AG04449 (cell line): ENCODE measurements at regions of chr3 and their contacts with region 1.

Region 1: DNA sequence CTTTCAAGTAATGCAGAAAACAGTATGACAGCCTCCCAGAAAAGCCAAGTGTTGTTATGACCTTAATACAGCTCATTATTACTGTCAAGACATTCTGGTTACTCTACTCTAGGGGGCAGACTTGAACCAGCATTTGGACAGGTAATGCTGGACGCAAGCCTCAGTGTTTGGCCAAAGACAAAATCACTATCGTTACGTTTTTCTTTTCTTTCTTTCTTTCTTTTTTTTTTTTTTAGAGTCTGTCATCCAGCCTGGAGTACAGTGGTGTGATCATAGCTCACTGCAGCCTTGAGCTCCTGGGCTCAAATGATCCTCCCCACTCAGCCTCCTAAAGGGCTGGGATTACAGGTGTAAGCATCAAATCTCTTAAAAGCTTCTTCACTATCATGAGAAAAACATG is 29.4 kb upstream of the TMEM45A start:
- DNase-seq: peak; percentile 12
- H3K4me3 ChIP-seq: no peak overlapping the region
- CTCF ChIP-seq: peak; percentile 66

Region 2: GRCh38 chr3:100352296-100353231 is 110.4 kb before region 1 on chr3:
- CTCF ChIA-PET with region 1: no interaction called
- POLR2A ChIA-PET with region 1: no interaction called
- DNase-seq: peak; percentile 60
- H3K4me3 ChIP-seq: no peak overlapping the region
- CTCF ChIP-seq: no peak

Region 3: DNA sequence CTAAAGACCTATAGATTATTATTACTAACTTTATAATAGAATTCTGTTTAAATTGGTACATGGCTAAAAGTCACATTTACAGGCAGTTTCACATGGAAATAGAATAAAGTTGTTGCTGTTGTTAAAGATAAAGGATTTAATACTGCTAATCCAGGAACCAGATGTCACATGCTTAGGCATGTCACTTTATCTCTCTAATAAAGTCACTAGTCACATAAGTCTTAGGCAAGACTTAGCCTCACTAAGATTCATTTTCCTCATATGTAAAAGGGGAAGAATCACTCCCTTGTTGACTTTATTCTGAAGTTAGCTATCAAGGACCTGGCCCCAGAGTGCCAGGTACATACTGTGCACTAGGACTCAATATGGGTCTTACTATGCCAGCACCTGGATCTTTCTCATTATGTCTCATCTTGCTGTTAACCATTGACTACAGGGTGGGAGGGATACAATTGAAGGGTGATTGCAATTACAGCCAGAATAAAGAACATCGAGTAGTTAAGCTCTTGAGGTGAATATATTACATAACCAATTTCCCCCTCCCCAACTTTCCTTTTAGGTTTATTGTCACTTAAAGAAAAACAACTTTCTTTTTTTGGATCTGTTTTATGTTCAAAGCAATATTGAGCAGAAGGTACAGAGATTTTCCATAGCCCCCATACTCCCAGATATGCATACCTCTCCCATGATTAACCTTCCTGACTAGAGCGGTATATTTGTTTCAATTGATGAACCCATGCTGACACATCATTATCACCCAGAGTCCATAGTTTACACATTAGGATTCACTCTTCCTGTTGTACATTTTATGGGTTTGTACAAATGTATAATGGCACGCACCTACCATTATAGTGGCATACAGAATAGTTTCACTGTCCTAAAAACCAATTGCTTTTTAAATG is 25.0 kb before region 1 on chr3:
- CTCF ChIA-PET with region 1: interaction called, 14 read pairs
- POLR2A ChIA-PET with region 1: no interaction called
- DNase-seq: no peak
- H3K4me3 ChIP-seq: no peak overlapping the region
- CTCF ChIP-seq: no peak

Region 4: DNA sequence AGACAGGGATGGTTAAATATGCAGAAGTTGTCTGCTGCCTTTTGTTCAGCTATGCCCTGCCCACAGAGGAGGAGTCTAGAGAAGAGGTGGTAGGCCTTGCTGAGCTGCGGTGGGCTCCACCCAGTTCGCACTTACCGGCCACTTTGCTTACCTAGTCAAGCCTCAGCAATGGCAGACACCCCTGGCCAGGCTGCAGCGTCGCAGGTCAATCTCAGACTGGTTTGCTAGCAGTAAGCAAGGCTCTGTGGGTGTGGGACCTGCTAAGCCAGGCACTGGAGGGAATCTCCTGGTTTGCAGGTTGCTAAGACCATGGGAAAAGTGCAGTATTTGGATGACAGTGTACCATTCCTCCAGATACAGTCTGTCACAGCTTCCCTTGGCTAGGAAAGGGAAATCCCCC is 17.1 kb after region 1 on chr3:
- CTCF ChIA-PET with region 1: interaction called, 30 read pairs
- POLR2A ChIA-PET with region 1: no interaction called
- DNase-seq: no peak
- H3K4me3 ChIP-seq: no peak overlapping the region
- CTCF ChIP-seq: no peak

Region 5: DNA sequence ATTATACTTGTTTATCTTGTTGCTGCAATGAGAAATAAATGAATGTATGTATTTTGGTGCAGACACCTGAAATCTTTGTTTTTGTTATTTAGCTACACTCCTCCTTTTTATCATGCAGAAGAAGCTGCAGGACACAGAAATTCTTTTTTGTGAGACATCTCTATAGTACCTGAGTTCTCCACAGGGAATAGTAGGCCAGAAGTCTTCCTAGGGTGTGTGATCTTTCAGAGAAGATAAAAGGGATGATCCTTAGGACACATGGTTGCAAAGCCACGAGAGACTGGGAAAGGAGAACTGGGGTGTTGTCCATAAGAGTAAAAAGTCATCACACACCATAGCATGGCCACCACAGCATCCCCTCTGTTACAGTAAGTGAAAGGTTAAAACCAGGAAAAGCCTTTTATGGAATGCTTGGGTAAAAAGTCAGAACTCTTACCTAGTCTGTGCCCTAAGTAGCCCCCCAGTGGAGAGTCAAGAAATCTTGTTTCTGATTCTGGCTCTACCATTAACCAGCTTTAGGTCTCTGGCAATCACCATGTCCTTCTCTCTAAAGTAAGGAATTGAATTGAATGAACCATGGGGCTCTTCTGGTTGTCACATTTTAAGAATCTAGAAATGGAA is 114.5 kb after region 1 on chr3:
- CTCF ChIA-PET with region 1: interaction called, 14 read pairs
- POLR2A ChIA-PET with region 1: no interaction called
- DNase-seq: no peak
- H3K4me3 ChIP-seq: no peak overlapping the region
- CTCF ChIP-seq: no peak

Region 6: DNA sequence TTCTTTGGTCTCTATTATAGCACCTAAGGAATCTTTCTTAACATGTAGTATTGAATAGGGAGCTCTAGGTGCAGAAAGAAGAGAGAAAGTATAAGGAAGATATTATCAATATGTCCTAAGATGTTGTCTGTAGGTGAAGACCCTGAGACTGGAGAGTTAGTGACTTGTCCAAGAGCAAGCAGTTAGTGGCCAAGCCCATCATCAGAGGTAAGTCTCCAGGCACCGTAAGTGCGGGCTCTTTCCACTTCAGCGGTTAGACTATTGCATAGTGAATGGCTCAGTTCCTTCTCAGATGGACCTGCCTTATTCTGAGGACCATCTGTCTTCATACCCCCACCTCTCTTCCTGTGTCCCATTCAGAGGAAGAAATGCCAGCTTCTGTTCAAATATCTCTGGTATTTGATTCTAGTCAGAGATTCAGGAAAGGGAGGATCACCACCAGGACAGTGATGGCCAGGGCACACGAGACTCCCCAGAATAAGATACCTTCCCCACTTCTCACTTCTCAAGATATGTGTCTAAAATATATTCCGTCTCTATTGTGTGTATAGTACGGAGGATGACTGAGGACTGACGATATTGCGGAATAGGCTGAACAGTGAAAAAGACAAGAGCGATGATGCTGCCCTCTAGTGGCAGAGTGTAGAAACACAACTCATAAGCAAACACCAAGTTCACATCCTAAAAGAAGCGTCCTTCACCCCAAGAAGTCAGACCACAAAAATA is 127.3 kb after region 1 on chr3:
- CTCF ChIA-PET with region 1: interaction called, 406 read pairs
- POLR2A ChIA-PET with region 1: no interaction called
- DNase-seq: no peak
- H3K4me3 ChIP-seq: peak overlapping the region; percentile 10; the same call in 1 of the 2 replicates
- CTCF ChIP-seq: peak; percentile 72

Region 7: DNA sequence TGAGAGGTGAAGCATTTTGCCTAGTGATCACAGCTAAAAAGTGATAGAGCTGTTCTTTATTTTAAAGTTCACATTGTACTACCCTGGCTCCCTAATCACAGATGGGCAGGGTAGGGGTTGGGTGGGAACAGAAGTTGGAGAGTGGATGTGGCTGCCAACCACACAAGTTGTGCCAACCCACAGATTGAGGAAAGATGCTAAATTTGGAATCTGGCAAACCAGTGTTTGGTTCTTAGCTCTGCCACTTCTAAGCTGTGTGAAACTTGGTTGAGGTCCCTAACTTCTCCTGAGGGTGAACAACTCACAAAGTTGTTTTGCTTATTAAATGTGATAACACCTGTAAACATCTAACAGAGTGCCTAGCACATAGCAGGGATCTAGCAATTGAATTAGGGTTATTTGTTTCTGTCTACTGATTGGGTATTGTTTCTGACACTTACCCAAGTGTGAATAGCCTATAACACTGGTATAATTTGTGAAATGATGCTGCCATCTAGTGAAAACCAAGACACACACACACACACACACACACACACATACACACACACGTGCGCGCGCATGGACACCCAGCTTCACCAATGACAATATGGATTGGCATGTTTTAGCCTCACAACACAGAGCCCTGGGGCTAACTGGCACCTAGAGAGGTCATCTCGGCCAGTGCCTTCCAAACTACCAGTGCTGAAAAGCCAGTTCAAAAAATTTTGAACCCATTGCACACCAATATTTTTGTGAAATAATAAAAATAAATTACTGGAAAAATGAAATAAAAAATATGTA is 171.7 kb after region 1 on chr3:
- CTCF ChIA-PET with region 1: interaction called, 22 read pairs
- POLR2A ChIA-PET with region 1: no interaction called
- DNase-seq: no peak
- H3K4me3 ChIP-seq: no peak overlapping the region
- CTCF ChIP-seq: no peak